Heart left ventricle (tissue), 16 donors: ENCODE measurements at regions of chr3 and their contacts with region 1.

Region 1: GRCh38 chr3:125767641-125768040 is 172.3 kb upstream of the OSBPL11 start:
- DNase-seq: no peak
- ATAC-seq: no peak
- H3K4me3 ChIP-seq: no peak overlapping the region
- H3K27ac ChIP-seq: no peak overlapping the region
- H3K4me1 ChIP-seq: peaks cover 0 to 13% (median 0%) of the 10 kb centered on the region in 12 donors
- H3K27me3 ChIP-seq: peaks cover 0 to 12% (median 0%) of the 10 kb centered on the region in 9 donors
- CTCF ChIP-seq: no peak
- POLR2A ChIP-seq: no peak

Region 2: DNA sequence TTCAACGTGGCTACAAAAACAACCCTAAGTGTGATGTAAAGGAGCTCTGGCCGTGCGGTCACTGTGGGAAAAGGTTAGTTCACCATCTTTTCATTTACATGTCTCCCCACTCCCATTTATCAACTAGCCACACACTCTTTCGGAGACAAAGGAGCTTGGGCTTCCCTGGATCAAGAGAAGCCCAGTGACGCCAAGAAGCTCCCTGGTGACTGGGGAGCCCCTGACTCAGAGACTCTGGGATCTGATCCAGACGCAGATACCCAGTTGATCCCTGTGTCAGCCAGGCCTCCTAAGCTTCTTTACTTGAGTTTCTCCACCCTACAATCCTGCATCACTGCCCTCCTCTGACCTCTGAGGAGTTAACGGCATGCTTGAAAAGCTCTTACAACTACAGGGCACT is 755.7 kb before region 1 on chr3:
- intact Hi-C with region 1: no loop called
- DNase-seq: no peak
- ATAC-seq: no peak
- H3K4me3 ChIP-seq: no peak overlapping the region
- H3K27ac ChIP-seq: no peak overlapping the region
- H3K4me1 ChIP-seq: peaks cover 0 to 31% (median 14%) of the 10 kb centered on the region in 12 donors
- H3K27me3 ChIP-seq: no peaks in the 10 kb centered on the region
- CTCF ChIP-seq: no peak
- POLR2A ChIP-seq: no peak

Region 3: DNA sequence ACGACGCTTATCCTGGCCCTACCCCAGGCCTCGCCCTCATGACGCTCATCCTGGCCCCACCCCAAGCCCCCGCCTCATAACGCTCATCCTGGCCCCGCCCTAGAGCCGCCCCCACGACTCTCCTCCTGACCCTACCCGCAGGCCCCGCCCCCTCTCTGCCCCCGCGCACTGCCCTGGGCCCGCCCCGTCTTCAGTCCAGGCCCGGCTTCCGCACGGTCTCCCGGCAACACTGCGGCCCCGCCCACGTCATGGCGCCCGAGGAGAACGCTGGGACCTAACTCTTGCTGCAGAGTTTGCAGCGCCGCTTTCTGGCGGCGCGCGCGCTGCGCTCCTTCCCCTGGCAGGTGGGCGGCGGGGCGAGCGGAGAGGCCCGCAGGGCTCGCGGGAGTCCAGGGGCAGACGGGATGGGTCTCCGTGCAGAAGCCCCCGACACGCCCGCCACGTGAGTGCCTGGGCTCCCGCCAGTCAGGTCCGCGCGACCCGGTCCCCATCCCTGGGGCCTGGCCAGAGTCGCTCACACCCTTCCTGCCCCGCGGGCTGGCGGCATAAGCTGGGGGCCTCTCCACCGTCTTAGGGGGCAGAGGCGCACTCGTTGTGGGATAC is 148.8 kb after region 1 on chr3:
- intact Hi-C with region 1: loop called in 1 of 10 experiments (anchors 10 kb)
- DNase-seq: peak in 1 of 5 donors; percentile 98
- ATAC-seq: peak; percentile 99 to 100 (median 100)
- H3K4me3 ChIP-seq: peak overlapping the region; percentile 56 to 98 (median 78)
- H3K27ac ChIP-seq: peak overlapping the region in 11 of 12 donors; percentile 53 to 95 (median 87)
- H3K4me1 ChIP-seq: peaks cover 0 to 15% (median 6%) of the 10 kb centered on the region in 12 donors
- H3K27me3 ChIP-seq: no peaks in the 10 kb centered on the region
- CTCF ChIP-seq: peak in 7 of 12 donors; percentile 10 to 53 (median 36)
- POLR2A ChIP-seq: no peak